Activated T-helper 1 cell treated with anti-CD3 and anti-CD28 coated beads, Interleukin-12 subunit alpha, Interleukin-12 subunit beta, Interleukin-2, Interleukin-4 antibody, amounts not matched to agents 30 ng/mL and 10 ng/mL and 1 ng/mL, durations not matched to agents 14 hours and 24 hours and 36 hours (primary cell): ENCODE measurements at regions of chr11 and their contacts with region 1.

Region 1: GRCh38 chr11:3699411-3699810 is 28.2 kb upstream of the CHRNA10 start:
- DNase-seq: no peak
- H3K4me3 Mint-ChIP-seq: no peak overlapping the region
- H3K27ac Mint-ChIP-seq: no peak overlapping the region
- H3K4me1 Mint-ChIP-seq: no peaks in the 10 kb centered on the region
- H3K27me3 Mint-ChIP-seq: no peaks in the 10 kb centered on the region

Region 2: GRCh38 chr11:3773180-3773579 is 73.8 kb after region 1 on chr11:
- intact Hi-C with region 1: loop called (anchors 5 kb)
- DNase-seq: no peak
- H3K4me3 Mint-ChIP-seq: no peak overlapping the region
- H3K27ac Mint-ChIP-seq: no peak overlapping the region
- H3K4me1 Mint-ChIP-seq: peaks cover under 1% of the 10 kb centered on the region
- H3K27me3 Mint-ChIP-seq: no peaks in the 10 kb centered on the region